Endothelial cell of umbilical vein (primary cell): ENCODE measurements at regions of chr17 and their contacts with region 1.

Region 1: GRCh38 chr17:82030470-82031302 is 792 bp upstream of the RAC3 start:
- DNase-seq: peak; percentile 81
- H3K4me3 ChIP-seq: peak overlapping the region; percentile 51 to 78 (median 53)
- H3K27ac ChIP-seq: no peak overlapping the region
- H3K4me1 ChIP-seq: peaks cover 10% of the 10 kb centered on the region
- H3K27me3 ChIP-seq: no peaks in the 10 kb centered on the region
- CTCF ChIP-seq: peak; percentile 82 to 98
- POLR2A ChIP-seq: no peak

Region 2: GRCh38 chr17:82089723-82090548 is 59.2 kb after region 1 on chr17:
- CTCF ChIA-PET with region 1: interaction called, 13 read pairs
- POLR2A ChIA-PET with region 1: no interaction called
- dilution Hi-C with region 1: no loop called
- intact Hi-C with region 1: no loop called
- DNase-seq: no peak
- H3K4me3 ChIP-seq: no peak overlapping the region
- H3K27ac ChIP-seq: no peak overlapping the region
- H3K4me1 ChIP-seq: no peaks in the 10 kb centered on the region
- H3K27me3 ChIP-seq: no peaks in the 10 kb centered on the region
- CTCF ChIP-seq: no peak
- POLR2A ChIP-seq: no peak

Region 3: GRCh38 chr17:82105882-82106687 is 75.4 kb after region 1 on chr17:
- CTCF ChIA-PET with region 1: interaction called, 11 read pairs
- POLR2A ChIA-PET with region 1: no interaction called
- dilution Hi-C with region 1: no loop called
- intact Hi-C with region 1: no loop called
- DNase-seq: no peak
- H3K4me3 ChIP-seq: no peak overlapping the region
- H3K27ac ChIP-seq: peak overlapping the region; percentile 9
- H3K4me1 ChIP-seq: peaks cover 10% of the 10 kb centered on the region
- H3K27me3 ChIP-seq: no peaks in the 10 kb centered on the region
- CTCF ChIP-seq: peak; percentile 23 to 35
- POLR2A ChIP-seq: no peak

Region 4: GRCh38 chr17:82205719-82206508 is 175.2 kb after region 1 on chr17:
- CTCF ChIA-PET with region 1: interaction called, 18 read pairs
- POLR2A ChIA-PET with region 1: no interaction called
- dilution Hi-C with region 1: no loop called
- intact Hi-C with region 1: loop called (anchors 10 kb)
- DNase-seq: peak; percentile 77
- H3K4me3 ChIP-seq: no peak overlapping the region
- H3K27ac ChIP-seq: peak overlapping the region; percentile 35
- H3K4me1 ChIP-seq: peaks cover 7% of the 10 kb centered on the region
- H3K27me3 ChIP-seq: no peaks in the 10 kb centered on the region
- CTCF ChIP-seq: peak; percentile 86 to 89
- POLR2A ChIP-seq: peak; percentile 80

Region 5: GRCh38 chr17:82297714-82298537 is 267.2 kb after region 1 on chr17:
- CTCF ChIA-PET with region 1: interaction called, 16 read pairs
- POLR2A ChIA-PET with region 1: no interaction called
- dilution Hi-C with region 1: no loop called
- intact Hi-C with region 1: no loop called
- DNase-seq: peak; percentile 84
- H3K4me3 ChIP-seq: peak overlapping the region in 2 of 3 experiments; percentile 32 to 43
- H3K27ac ChIP-seq: peak overlapping the region; percentile 93
- H3K4me1 ChIP-seq: peaks cover 41% of the 10 kb centered on the region
- H3K27me3 ChIP-seq: no peaks in the 10 kb centered on the region
- CTCF ChIP-seq: no peak
- POLR2A ChIP-seq: peak; percentile 73